ENCODE measurements at regions of chr10 and their contacts with region 1.

Region 1: DNA sequence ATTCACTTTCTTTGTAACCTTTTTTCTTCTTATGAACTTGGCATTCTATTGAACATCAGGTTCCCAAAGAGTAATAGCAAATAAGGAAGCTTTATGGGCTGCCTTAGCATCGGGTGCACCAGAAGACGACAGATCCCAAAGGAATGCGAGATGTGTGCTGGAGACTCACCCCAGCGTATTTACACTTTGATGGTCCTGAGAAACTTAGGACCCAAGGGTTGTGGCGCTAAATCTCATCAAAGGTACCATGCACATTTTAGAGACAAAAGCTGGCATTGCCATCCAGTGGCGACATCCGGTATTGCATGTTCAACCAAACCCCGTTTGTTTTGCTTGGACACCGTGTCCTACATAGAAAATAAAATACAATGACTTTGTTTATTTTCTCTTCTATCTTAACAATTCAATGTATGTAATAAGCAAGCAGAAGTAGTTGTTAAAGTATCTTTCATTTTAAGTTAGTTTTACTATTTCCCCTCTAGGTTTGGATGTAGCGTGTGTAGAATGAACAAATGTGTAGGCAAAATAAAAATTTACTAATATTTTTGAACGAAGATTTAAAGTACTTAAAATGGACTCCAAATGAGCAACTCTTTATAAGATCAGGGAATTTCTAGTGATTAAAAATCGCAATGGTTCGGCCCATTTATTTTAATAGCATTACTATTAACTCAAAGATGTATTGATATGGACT is 1154.8 kb downstream of the GATA3 start:
- DNase-seq: peak; percentile 32 to 75 (median 58)
- ATAC-seq: peak; percentile 68
- H3K4me3 ChIP-seq: no peak overlapping the region
- H3K4me3 Mint-ChIP-seq: no peak overlapping the region
- H3K27ac ChIP-seq: no peak overlapping the region
- H3K27ac Mint-ChIP-seq: no peak overlapping the region
- H3K4me1 ChIP-seq: no peaks in the 10 kb centered on the region
- H3K4me1 Mint-ChIP-seq: peaks cover 2 to 8% (median 6%) of the 10 kb centered on the region in 7 donors
- H3K27me3 ChIP-seq: no peaks in the 10 kb centered on the region
- H3K27me3 Mint-ChIP-seq: peaks cover 4 to 13% (median 6%) of the 10 kb centered on the region in 5 donors

Region 2: GRCh38 chr10:7756360-7756992 is 1452.8 kb before region 1 on chr10:
- CTCF ChIA-PET with region 1: no interaction called
- POLR2A ChIA-PET with region 1: no interaction called
- intact Hi-C with region 1: loop called in 1 of 2 experiments (anchors 5 kb)
- DNase-seq: peak in 4 of 9 donors; percentile 3 to 24 (median 6)
- ATAC-seq: peak; percentile 38
- H3K4me3 ChIP-seq: no peak overlapping the region
- H3K4me3 Mint-ChIP-seq: no peak overlapping the region
- H3K27ac ChIP-seq: no peak overlapping the region
- H3K27ac Mint-ChIP-seq: peak overlapping the region in 1 of 9 donors; percentile 39
- H3K4me1 ChIP-seq: no peaks in the 10 kb centered on the region
- H3K4me1 Mint-ChIP-seq: no peaks in the 10 kb centered on the region
- H3K27me3 ChIP-seq: no peaks in the 10 kb centered on the region
- H3K27me3 Mint-ChIP-seq: no peaks in the 10 kb centered on the region

Region 3: DNA sequence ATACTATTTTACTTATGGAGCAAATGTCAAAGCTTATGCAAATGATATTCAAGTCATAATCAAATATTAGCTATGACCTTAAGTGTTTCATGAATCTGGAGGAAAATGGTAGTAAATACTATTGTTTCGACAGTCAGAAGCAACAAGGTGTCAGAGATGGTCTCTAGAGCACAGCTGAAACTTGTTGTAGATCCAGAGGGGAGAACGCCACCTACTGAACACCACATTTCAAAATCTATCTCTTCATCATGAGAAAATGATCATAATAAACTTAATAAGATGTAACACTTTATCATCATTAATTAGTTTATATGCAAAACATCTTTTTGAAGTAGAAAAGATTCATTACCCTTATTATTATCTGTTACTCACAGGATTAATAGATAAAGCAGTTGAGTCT is 736.0 kb before region 1 on chr10:
- CTCF ChIA-PET with region 1: interaction called, 4 read pairs
- POLR2A ChIA-PET with region 1: no interaction called
- intact Hi-C with region 1: loop called (anchors 1 to 5 kb)
- DNase-seq: peak in 7 of 9 donors; percentile 8 to 61 (median 36)
- ATAC-seq: peak; percentile 51
- H3K4me3 ChIP-seq: no peak overlapping the region
- H3K4me3 Mint-ChIP-seq: no peak overlapping the region
- H3K27ac ChIP-seq: no peak overlapping the region
- H3K27ac Mint-ChIP-seq: no peak overlapping the region
- H3K4me1 ChIP-seq: no peaks in the 10 kb centered on the region
- H3K4me1 Mint-ChIP-seq: peaks cover 0 to 3% (median 0%) of the 10 kb centered on the region in 7 donors
- H3K27me3 ChIP-seq: no peaks in the 10 kb centered on the region
- H3K27me3 Mint-ChIP-seq: peaks cover 8 to 46% (median 25%) of the 10 kb centered on the region in 5 donors

Region 4: GRCh38 chr10:9010093-9010492 is 199.2 kb before region 1 on chr10:
- CTCF ChIA-PET with region 1: no interaction called
- POLR2A ChIA-PET with region 1: no interaction called
- intact Hi-C with region 1: loop called in 1 of 2 experiments (anchors 1 kb)
- DNase-seq: peak in 7 of 9 donors; percentile 62 to 87 (median 83)
- ATAC-seq: peak; percentile 94
- H3K4me3 ChIP-seq: no peak overlapping the region
- H3K4me3 Mint-ChIP-seq: peak overlapping the region in 9 of 10 donors; percentile 26 to 87 (median 65)
- H3K27ac ChIP-seq: no peak overlapping the region
- H3K27ac Mint-ChIP-seq: peak overlapping the region in 8 of 9 donors; percentile 72 to 96 (median 86)
- H3K4me1 ChIP-seq: peaks cover 5 to 28% of the 10 kb centered on the region in 2 donors
- H3K4me1 Mint-ChIP-seq: peaks cover 11 to 71% (median 55%) of the 10 kb centered on the region in 7 donors
- H3K27me3 ChIP-seq: no peaks in the 10 kb centered on the region
- H3K27me3 Mint-ChIP-seq: no peaks in the 10 kb centered on the region

Region 5: DNA sequence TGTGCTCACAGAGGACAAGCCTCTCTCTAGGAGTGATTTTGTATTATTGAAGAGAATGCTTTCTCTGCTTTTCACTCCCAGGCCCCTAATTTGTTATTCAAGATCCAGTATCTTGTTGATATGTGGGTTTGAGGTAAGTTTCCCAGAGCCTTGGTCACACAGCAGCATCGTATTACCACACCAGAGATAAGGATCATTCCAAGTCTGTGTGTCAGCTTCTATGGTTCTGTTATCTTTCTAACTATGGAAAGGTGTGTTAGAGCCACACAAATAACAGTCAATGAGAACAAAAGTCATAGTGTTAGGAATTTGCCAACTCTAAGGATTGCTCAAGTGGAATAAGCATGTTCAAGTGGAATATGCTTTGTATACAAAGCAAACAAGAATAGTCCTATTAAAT is 53.5 kb after region 1 on chr10:
- CTCF ChIA-PET with region 1: no interaction called
- POLR2A ChIA-PET with region 1: no interaction called
- intact Hi-C with region 1: no loop called
- DNase-seq: no peak
- ATAC-seq: no peak
- H3K4me3 ChIP-seq: no peak overlapping the region
- H3K4me3 Mint-ChIP-seq: no peak overlapping the region
- H3K27ac ChIP-seq: no peak overlapping the region
- H3K27ac Mint-ChIP-seq: no peak overlapping the region
- H3K4me1 ChIP-seq: no peaks in the 10 kb centered on the region
- H3K4me1 Mint-ChIP-seq: no peaks in the 10 kb centered on the region
- H3K27me3 ChIP-seq: no peaks in the 10 kb centered on the region
- H3K27me3 Mint-ChIP-seq: peaks cover 18 to 53% (median 30%) of the 10 kb centered on the region in 5 donors

Region 6: GRCh38 chr10:9302120-9302746 is 93.0 kb after region 1 on chr10:
- CTCF ChIA-PET with region 1: no interaction called
- POLR2A ChIA-PET with region 1: no interaction called
- intact Hi-C with region 1: loop called (anchors 2 to 5 kb)
- DNase-seq: peak in 7 of 9 donors; percentile 21 to 62 (median 53)
- ATAC-seq: peak; percentile 68
- H3K4me3 ChIP-seq: no peak overlapping the region
- H3K4me3 Mint-ChIP-seq: no peak overlapping the region
- H3K27ac ChIP-seq: no peak overlapping the region
- H3K27ac Mint-ChIP-seq: no peak overlapping the region
- H3K4me1 ChIP-seq: no peaks in the 10 kb centered on the region
- H3K4me1 Mint-ChIP-seq: peaks cover 0 to 3% (median 0%) of the 10 kb centered on the region in 7 donors
- H3K27me3 ChIP-seq: no peaks in the 10 kb centered on the region
- H3K27me3 Mint-ChIP-seq: peaks cover 0 to 10% (median 5%) of the 10 kb centered on the region in 5 donors

Measured in naive thymus-derived CD4-positive, alpha-beta T cell (primary cell).